Activated naive CD4-positive, alpha-beta T cell treated with anti-CD3 and anti-CD28 coated beads for 36 hours (primary cell): ENCODE measurements at regions of chr16 and their contacts with region 1.

Region 1: GRCh38 chr16:4957720-4958509 is at the start of gene SEC14L5:
- DNase-seq: peak; percentile 96
- H3K4me3 Mint-ChIP-seq: peak within 1 kb of the TSS; percentile 78
- H3K27ac Mint-ChIP-seq: no peak within 1 kb of the TSS
- H3K4me1 Mint-ChIP-seq: peaks cover 14% of the 10 kb centered on the region
- H3K27me3 Mint-ChIP-seq: peaks cover 30% of the 10 kb centered on the region
- total RNA-seq, gene SEC14L5: not detected

Region 2: DNA sequence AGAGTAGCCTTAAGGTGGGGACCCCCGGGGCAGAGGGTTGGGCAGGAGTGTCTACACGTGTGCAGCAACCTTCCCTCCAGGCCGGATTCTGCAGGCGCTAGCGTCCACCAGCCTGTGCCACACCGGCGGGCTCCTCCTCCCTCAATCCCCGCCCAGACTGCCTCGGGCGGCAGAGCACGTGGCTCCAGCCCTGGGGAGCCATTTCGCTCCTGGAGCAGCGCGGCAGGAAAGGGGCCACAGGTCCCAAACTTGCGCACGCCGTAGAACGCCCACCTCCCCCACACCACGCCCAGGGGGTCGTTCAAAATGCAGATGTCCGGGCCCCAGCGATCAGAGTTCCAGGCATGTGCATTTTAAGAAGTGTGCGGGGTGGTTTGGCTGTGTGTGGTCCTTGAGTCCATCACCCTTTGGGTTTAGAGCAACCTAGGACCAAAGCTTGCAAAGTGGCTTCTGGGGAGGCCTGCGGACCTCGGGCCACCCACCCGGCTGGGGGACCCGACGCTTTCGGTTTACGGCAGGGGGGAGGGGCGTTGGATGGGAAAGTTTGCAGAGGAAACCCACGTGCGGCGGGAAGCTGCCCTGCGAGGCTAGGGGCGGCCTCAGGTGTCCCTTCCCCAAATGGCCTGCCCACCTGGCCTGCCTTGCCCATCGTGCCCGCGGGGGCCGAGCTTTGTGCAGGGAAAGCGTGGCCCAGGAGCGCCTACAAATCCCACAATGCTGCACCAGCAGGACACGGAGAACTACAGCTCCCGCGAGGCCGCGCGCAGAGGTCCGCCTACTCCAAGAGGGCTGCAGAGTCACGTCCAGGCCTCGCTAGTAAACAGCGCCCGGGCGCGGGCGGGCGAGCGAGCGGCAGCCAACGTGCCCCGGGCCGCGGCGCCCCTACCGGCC is 686.5 kb before region 1 on chr16:
- CTCF ChIA-PET with region 1: no interaction called
- intact Hi-C with region 1: loop called (anchors 5 kb)
- DNase-seq: peak; percentile 95
- H3K4me3 Mint-ChIP-seq: peak overlapping the region; percentile 86
- H3K27ac Mint-ChIP-seq: peak overlapping the region; percentile 94
- H3K4me1 Mint-ChIP-seq: peaks cover 12% of the 10 kb centered on the region
- H3K27me3 Mint-ChIP-seq: no peaks in the 10 kb centered on the region

Region 3: GRCh38 chr16:4307215-4308037 is 650.5 kb before region 1 on chr16:
- CTCF ChIA-PET with region 1: no interaction called
- intact Hi-C with region 1: loop called (anchors 1 kb)
- DNase-seq: peak; percentile 95
- H3K4me3 Mint-ChIP-seq: peak overlapping the region; percentile 84
- H3K27ac Mint-ChIP-seq: peak overlapping the region; percentile 85
- H3K4me1 Mint-ChIP-seq: peaks cover 24% of the 10 kb centered on the region
- H3K27me3 Mint-ChIP-seq: no peaks in the 10 kb centered on the region

Region 4: GRCh38 chr16:4475880-4476788 is 481.8 kb before region 1 on chr16 and contains the start of gene HMOX2:
- CTCF ChIA-PET with region 1: no interaction called
- intact Hi-C with region 1: loop called (anchors 1 kb)
- DNase-seq: peak; percentile 95
- H3K4me3 Mint-ChIP-seq: peak within 1 kb of the TSS; percentile 89
- H3K27ac Mint-ChIP-seq: peak within 1 kb of the TSS; percentile 82
- H3K4me1 Mint-ChIP-seq: peaks cover 42% of the 10 kb centered on the region
- H3K27me3 Mint-ChIP-seq: no peaks in the 10 kb centered on the region
- total RNA-seq, gene HMOX2: 46.8 to 49.3 TPM

Region 5: DNA sequence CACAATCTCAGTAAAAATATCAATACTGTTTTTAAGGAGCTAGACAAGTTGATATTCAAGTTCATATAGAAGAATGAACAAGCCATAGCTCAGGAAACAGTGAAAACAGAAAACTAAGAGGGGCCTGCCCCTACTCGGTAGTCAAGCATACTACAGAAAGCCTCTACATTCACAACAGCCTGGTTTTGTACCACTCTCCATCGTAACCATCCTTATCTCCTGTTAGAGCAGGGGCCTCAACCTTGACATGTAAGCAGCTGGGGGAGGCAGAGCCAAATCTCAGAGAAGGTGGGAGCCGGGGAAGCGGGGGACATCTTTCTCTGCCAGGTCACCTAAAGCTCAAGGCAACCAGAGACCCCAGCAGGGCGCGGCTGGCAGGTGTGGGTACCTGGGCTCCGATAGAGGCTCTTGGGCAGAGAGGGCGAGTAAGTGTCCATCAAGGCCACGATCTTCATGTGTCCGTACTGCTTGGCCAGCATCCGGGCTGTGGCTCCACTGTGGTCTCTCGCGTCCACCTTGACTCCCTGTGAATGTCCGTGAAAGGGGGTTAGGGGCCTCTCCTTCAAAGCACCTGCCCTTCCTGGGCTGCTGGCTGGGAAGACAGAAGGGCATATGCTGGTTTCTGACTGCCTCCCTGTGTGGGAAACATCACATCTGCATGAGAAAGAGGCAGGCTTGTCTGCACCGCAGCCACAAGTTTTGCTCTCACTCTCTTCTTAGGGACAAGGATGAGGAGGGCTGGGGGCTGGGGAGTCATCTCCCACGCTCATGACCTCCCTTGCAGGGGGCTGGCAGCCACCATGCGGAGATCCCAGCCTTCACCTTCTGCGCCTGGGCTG is 244.0 kb before region 1 on chr16:
- CTCF ChIA-PET with region 1: no interaction called
- intact Hi-C with region 1: loop called (anchors 1 kb)
- DNase-seq: no peak
- H3K4me3 Mint-ChIP-seq: no peak overlapping the region
- H3K27ac Mint-ChIP-seq: no peak overlapping the region
- H3K4me1 Mint-ChIP-seq: no peaks in the 10 kb centered on the region
- H3K27me3 Mint-ChIP-seq: no peaks in the 10 kb centered on the region

Region 6: DNA sequence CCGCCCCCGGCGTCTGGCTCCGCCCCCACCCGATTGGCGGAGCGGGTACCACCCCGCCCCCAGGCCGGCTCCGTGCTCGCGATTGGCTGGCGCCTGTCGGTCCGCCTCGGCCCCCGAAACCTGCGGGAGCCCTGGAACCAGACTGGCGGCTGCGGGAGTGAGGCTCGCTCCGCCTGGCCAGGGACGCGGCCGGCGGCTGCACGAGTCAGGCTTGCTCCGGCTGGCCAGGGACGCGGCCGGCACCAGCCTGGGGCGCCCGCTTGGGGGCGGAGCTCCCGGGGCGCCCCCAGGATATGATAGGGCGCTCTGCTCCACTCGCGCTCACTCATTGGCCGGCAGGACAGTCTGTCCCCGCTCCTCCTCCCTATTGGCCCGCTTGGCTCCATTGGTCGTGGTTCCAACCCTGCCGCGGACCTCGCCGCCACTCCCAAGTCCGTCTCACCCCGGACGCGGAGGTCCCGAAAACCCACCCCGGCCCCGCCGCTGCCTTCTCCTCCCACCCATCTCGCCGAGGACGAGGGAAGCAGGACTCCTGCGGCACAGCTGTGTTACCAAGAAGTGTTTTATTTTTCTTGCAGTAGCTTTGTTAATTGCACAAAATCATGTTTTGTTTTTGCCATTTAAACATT is 155.1 kb before region 1 on chr16:
- CTCF ChIA-PET with region 1: interaction called, 3 read pairs
- intact Hi-C with region 1: loop called (anchors 1 kb)
- DNase-seq: peak; percentile 87
- H3K4me3 Mint-ChIP-seq: peak overlapping the region; percentile 77
- H3K27ac Mint-ChIP-seq: no peak overlapping the region
- H3K4me1 Mint-ChIP-seq: peaks cover 9% of the 10 kb centered on the region
- H3K27me3 Mint-ChIP-seq: no peaks in the 10 kb centered on the region